ENCODE measurements at regions of chr16 and their contacts with region 1.

Region 1: DNA sequence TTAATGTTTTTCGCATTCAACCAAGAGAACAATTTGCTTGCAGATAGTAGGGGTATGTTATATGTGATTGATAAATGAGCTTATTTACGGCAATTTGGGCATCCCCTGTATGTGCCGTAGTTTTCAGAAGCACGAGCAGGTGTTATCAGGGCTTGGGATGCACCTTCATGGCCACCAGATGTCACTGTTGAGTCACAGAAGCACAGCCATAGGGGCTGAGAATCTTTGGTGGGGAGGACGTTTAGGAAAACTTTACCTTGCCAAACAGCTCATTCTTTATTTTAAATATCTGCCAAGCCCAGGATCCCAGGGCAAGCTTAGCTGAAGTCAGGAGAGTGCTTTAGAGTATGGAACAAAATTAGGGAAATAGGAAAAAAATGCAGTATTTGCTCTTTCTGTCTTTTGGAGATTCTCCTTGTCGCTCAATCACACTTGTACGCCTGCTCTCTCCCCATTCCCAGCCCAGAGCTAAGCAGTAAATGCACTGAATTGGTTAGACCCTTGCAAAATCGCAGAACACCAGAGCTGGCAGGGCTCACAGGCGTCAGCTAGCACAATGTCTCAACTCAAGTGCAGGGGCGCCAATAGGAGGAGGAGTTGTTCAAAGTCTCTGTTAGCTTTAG is 93.6 kb upstream of the MPHOSPH6 start:
- DNase-seq: peak; percentile 66
- H3K4me3 Mint-ChIP-seq: no peak overlapping the region
- H3K27ac Mint-ChIP-seq: no peak overlapping the region
- H3K4me1 Mint-ChIP-seq: no peaks in the 10 kb centered on the region
- H3K27me3 Mint-ChIP-seq: peaks cover 98% of the 10 kb centered on the region
- CTCF ChIP-seq: peak; percentile 90

Region 2: DNA sequence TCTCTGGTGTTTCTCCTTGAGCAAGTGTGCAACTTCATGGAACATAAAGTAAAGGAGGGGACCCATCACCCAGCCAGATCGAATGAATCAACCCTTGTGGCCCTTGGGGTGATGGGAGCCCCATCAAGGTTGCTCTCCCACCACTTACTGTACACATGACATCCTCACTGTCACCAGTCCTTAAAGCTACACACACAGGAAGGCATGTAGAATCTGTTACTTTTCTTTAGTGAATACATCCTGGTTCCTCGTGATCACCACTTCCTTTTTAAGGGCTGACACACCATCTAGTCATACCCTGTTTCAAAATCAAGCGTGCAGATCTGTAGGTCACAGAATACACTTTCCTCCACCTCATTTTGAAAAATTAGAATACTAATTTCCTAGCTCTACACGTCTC is 71.0 kb before region 1 on chr16:
- CTCF ChIA-PET with region 1: no interaction called
- intact Hi-C with region 1: no loop called
- DNase-seq: no peak
- H3K4me3 Mint-ChIP-seq: no peak overlapping the region
- H3K27ac Mint-ChIP-seq: no peak overlapping the region
- H3K4me1 Mint-ChIP-seq: peaks cover 26% of the 10 kb centered on the region
- H3K27me3 Mint-ChIP-seq: peaks cover 27% of the 10 kb centered on the region
- CTCF ChIP-seq: no peak

Region 3: GRCh38 chr16:82344157-82344556 is 80.5 kb after region 1 on chr16:
- CTCF ChIA-PET with region 1: interaction called, 13 read pairs
- intact Hi-C with region 1: loop called (anchors 2 kb)
- DNase-seq: peak; percentile 9
- H3K4me3 Mint-ChIP-seq: no peak overlapping the region
- H3K27ac Mint-ChIP-seq: no peak overlapping the region
- H3K4me1 Mint-ChIP-seq: no peaks in the 10 kb centered on the region
- H3K27me3 Mint-ChIP-seq: peaks cover 25% of the 10 kb centered on the region
- CTCF ChIP-seq: no peak

Region 4: DNA sequence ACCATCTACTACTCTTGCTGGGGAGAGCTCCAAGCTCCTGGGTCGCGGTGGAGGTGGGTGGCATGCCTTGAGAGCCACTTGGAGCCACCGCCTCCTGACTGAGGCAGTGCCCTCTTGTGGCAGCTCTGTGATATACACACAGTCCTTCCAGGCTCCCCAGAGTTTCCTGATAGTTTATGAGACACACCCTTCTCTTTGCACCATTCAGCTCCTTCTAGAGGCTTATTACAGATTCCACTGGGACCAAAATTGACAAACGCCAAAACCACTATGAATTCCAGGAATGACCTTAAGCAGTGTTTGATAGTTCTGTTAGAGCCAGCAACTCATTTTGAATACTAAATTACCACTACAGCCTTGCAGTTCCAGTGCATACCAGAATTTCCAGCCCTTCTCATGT is 193.1 kb after region 1 on chr16:
- CTCF ChIA-PET with region 1: interaction called, 4 read pairs
- intact Hi-C with region 1: loop called (anchors 1 kb)
- DNase-seq: peak; percentile 71
- H3K4me3 Mint-ChIP-seq: no peak overlapping the region
- H3K27ac Mint-ChIP-seq: no peak overlapping the region
- H3K4me1 Mint-ChIP-seq: no peaks in the 10 kb centered on the region
- H3K27me3 Mint-ChIP-seq: peaks cover 25% of the 10 kb centered on the region
- CTCF ChIP-seq: peak; percentile 63

Region 5: GRCh38 chr16:82580298-82580890 is 316.8 kb after region 1 on chr16:
- CTCF ChIA-PET with region 1: no interaction called
- intact Hi-C with region 1: loop called (anchors 1 kb)
- DNase-seq: peak; percentile 16
- H3K4me3 Mint-ChIP-seq: no peak overlapping the region
- H3K27ac Mint-ChIP-seq: no peak overlapping the region
- H3K4me1 Mint-ChIP-seq: no peaks in the 10 kb centered on the region
- H3K27me3 Mint-ChIP-seq: peaks cover 12% of the 10 kb centered on the region
- CTCF ChIP-seq: no peak

Region 6: GRCh38 chr16:82603784-82604411 is 340.3 kb after region 1 on chr16:
- CTCF ChIA-PET with region 1: interaction called, 10 read pairs
- intact Hi-C with region 1: no loop called
- DNase-seq: peak; percentile 21
- H3K4me3 Mint-ChIP-seq: no peak overlapping the region
- H3K27ac Mint-ChIP-seq: no peak overlapping the region
- H3K4me1 Mint-ChIP-seq: no peaks in the 10 kb centered on the region
- H3K27me3 Mint-ChIP-seq: no peaks in the 10 kb centered on the region
- CTCF ChIP-seq: no peak

Region 7: DNA sequence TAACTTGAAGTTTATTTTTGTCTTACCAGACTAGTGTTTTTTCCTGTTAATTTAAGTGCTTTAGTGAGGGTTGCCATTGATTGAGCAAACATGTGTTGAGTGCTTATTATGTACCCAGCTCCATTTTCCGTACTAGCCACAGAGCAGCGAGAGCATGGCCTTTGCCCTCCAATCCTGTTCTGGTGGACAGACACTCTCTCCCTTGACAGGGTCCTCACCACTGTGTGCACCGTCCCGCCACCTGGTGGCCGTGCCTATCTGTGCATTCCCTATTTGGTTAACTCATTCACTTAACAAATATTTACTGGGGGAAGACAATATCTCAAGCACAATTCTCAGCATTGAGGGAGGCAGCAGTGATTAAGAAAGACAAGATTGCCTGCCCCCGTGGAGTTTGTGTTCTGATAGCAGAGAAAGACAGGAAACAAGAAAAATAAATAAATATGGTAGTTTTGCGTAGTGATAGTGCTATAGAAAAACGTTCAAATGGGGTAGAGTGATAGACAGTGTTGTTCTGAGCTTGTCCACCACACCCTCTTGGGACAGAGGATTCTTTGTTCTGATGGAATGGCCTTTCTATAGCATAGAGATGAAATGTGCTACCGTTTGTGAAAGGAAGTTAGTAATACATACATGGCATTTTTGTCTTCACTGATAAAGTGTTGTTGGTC is 376.2 kb after region 1 on chr16:
- CTCF ChIA-PET with region 1: no interaction called
- intact Hi-C with region 1: loop called (anchors 1 kb)
- DNase-seq: peak; percentile 74
- H3K4me3 Mint-ChIP-seq: no peak overlapping the region
- H3K27ac Mint-ChIP-seq: no peak overlapping the region
- H3K4me1 Mint-ChIP-seq: peaks cover 8% of the 10 kb centered on the region
- H3K27me3 Mint-ChIP-seq: no peaks in the 10 kb centered on the region
- CTCF ChIP-seq: peak; percentile 79

Region 8: GRCh38 chr16:83878838-83879237 is 1615.2 kb after region 1 on chr16:
- CTCF ChIA-PET with region 1: no interaction called
- intact Hi-C with region 1: loop called (anchors 10 kb)
- DNase-seq: peak; percentile 39
- H3K4me3 Mint-ChIP-seq: no peak overlapping the region
- H3K27ac Mint-ChIP-seq: no peak overlapping the region
- H3K4me1 Mint-ChIP-seq: peaks cover 8% of the 10 kb centered on the region
- H3K27me3 Mint-ChIP-seq: peaks cover 69% of the 10 kb centered on the region
- CTCF ChIP-seq: peak; percentile 49

Measured in Calu3 (cell line).